ENCODE measurements at regions of chr11 and their contacts with region 1.

Region 1: DNA sequence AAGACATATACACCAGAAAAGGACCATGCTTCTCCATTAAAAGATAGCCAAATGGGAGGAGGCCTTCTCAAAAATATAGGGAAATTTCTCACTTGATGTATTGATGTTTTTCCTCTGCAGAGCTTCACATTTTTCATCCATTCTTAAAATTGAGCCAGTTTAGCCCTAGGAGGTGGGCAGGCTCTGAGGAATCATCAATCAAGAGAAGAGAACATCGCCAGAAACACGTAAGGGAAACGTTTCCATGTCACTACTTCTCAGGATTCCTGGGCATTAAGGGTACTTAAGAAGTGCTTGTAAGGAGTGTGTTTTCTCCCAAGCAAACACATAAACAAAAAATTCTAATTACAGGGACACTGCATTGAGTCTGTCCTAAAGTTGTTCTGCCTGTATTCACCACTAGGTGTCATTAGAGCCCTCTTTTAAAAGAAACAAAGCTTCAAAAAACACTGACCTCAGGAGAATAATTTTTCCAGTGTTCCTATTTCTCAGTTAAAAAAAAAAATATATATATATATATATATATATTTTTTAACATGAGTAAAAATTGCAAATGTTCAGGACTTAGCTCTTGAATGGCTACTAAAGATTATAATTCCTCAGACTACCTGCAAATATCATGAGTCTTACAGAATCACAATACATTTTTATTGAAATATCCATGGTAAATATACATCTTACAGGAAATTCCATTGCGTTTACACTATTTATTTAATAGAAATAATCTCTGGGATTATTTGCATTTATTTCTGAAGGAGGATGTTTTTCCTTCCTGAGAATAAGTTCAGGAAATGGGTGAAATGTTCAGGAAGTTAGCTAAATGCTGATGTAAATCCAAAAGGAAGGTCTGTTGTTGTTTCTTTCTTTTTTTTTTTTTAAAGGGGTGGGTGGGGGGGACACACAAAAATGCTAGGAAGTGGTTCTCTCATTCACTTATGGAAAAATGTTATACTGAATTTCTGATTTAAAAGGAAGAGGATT is 16.0 kb downstream of the FZD4 start:
- DNase-seq: no peak
- ATAC-seq: no peak

Region 2: DNA sequence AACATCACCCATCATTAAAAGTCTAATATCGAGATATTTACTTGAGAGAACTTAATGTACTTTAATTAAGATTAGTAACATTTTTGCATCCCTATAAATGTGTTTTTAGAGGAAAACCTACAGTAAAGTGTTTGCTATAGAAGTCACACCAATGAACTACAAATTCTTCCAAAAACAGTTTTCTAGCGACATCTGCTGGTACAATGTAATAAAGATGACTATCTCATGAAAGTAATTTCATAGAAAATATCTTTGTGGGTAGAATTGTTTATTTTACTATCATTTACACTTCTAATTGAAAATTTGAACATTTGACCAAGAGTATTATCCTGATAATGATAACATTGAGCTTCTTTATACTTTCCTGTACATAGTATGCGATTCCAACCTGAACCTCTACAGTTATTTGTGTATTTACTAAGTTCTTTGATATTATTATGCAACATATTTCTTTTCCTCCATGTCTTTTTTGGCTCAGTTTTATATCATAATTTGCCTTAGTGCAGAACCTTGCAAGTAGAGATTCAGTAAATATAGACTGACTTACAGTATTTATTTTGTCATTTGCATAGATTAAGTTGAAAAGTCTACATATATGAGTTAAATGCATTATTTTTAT is 351.2 kb after region 1 on chr11:
- intact Hi-C with region 1: loop called (anchors 1 kb)
- DNase-seq: no peak
- ATAC-seq: no peak

Measured in Right ventricle myocardium inferior (tissue), 1 donor.